Left cardiac atrium (tissue), 4 donors: ENCODE measurements at regions of chr3 and their contacts with region 1.

Region 1: DNA sequence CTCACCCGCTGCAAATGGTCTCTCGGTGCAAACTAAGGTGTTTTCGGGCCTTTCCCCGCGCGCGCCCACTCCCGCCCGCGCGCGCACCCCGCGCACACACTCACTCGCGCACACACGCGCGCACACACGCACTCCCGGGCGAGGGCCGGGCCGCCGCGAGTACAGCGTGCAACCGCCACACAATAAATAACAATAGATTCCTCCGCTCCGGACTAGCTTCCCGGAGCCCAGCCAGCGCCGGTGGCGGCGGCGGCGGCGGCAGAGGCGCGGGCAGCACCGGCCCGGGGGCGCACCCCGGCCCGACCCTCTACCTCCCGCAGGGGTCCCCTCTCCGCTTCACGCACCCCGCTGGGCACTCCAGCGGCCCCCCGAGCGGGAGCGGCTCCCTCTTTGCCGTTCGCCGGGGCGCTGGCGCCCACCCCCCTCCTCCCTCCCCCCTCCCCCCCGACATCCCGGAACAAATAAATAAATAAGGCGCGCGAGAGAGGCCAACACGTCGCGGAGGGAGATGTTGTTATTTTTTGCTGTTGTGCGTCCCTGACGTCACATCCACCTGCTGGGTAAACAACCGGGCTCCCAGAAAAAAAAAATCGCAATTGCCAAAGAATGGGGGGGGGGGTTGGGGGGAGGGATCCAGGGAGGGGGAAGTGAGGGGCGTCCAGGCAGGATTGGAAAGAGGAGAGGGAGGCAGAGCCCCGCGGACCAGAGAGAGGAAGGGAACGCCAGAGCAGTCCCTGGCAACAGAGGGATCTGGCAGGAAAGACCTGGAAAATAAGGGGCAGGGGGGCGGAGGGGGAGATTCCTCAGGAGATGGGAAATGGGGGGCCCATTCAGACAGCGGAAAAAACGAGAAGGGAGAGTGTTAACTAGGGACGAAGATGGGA is at the start of gene FOXP1:
- DNase-seq: peak; percentile 81
- ATAC-seq: peak; percentile 75 to 84
- total RNA-seq, gene FOXP1: 42.1 to 50.0 TPM

Region 2: GRCh38 chr3:70550723-70551319 is 1033.0 kb before region 1 on chr3:
- intact Hi-C with region 1: loop called in 1 of 2 experiments (anchors 5 kb)
- DNase-seq: peak; percentile 70
- ATAC-seq: peak; percentile 71 to 78

Region 3: DNA sequence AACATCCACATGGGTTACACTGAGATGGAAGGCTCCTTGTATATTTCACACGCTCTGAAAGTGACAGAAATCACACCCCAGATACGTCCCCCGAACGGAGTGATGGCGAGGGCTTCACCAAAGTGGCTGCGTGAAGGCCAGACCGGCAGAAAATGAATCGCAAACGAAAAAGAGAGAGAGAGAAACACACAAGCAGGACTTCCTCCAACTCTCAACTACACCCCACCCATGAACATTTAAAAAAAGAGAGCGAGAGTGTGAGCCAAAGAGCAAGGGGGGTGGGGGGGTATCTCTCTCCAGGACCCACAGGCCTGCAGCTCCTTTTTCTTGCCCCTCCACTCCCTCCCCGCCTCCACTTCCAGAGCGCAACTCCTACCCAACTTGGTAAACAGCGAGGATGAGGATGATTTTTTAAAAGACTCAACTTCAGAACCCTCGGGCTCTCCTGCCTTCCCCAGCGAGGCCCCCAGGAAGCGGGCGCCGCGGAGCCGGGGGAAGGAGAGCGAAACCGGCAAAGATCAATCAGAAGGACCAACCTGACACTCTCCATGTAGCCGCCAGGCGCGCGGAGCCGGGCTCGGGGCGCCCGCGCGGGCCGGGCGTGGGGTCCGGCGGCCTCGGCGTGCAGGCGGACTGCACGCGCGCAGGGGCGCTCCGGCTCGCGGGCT is 519.4 kb before region 1 on chr3:
- intact Hi-C with region 1: loop called in 1 of 2 experiments (anchors 10 kb)
- DNase-seq: no peak
- ATAC-seq: peak; percentile 60 to 62

Region 4: GRCh38 chr3:71305231-71306206 is 278.3 kb before region 1 on chr3:
- intact Hi-C with region 1: loop called in 1 of 2 experiments (anchors 5 kb)
- DNase-seq: peak; percentile 38
- ATAC-seq: peak; percentile 84 to 91

Region 5: DNA sequence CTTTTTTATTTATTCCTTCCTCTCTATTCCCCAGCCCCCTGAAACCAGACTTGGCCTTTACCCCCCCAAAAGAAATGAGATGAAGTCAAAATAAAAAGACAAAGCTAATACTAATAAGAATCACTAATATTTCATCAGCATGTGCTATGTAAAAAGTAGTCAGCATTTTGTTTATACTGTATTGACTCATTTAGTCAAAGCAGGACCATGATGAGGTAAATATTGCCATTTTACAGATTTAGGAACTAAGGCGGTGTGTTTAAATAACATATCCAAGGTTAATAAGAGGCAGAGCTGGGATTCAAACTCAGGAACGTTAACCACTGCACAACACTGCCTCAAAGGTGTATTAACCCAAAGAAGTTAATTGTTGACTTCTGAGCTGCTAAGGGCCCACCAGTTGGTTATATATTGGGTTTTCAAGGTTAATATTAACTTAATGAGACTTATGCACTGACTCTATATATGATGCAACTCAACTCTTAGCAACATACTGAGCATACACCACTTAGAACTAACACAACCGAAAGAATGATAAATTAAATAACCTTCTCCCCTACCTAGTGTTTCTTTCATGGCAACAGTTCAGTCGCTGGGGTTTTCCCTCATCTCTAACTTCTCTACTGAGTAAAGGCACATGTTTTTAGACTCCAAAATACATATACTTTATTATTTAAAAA is 35.0 kb before region 1 on chr3:
- intact Hi-C with region 1: no loop called
- DNase-seq: no peak
- ATAC-seq: no peak